Heart left ventricle (tissue), 16 donors: ENCODE measurements at regions of chr12 and their contacts with region 1.

Region 1: GRCh38 chr12:127115468-127116035 is 1151.4 kb upstream of the TMEM132C start:
- DNase-seq: no peak
- ATAC-seq: no peak
- H3K4me3 ChIP-seq: no peak overlapping the region
- H3K27ac ChIP-seq: no peak overlapping the region
- H3K4me1 ChIP-seq: no peaks in the 10 kb centered on the region
- H3K27me3 ChIP-seq: no peaks in the 10 kb centered on the region
- CTCF ChIP-seq: no peak
- POLR2A ChIP-seq: no peak

Region 2: GRCh38 chr12:127280393-127281275 is 165.1 kb after region 1 on chr12:
- intact Hi-C with region 1: loop called in 1 of 10 experiments (anchors 5 kb)
- DNase-seq: peak; percentile 11 to 72 (median 32)
- ATAC-seq: peak in 1 of 4 donors; percentile 61
- H3K4me3 ChIP-seq: no peak overlapping the region
- H3K27ac ChIP-seq: no peak overlapping the region
- H3K4me1 ChIP-seq: no peaks in the 10 kb centered on the region
- H3K27me3 ChIP-seq: peaks cover 0 to 37% (median 9%) of the 10 kb centered on the region in 9 donors
- CTCF ChIP-seq: peak; percentile 62 to 87 (median 74)
- POLR2A ChIP-seq: no peak

Region 3: GRCh38 chr12:127293507-127294310 is 178.2 kb after region 1 on chr12:
- intact Hi-C with region 1: loop called in 1 of 10 experiments (anchors 5 kb)
- DNase-seq: peak in 4 of 5 donors; percentile 17 to 76 (median 40)
- ATAC-seq: peak in 3 of 4 donors; percentile 48 to 80 (median 59)
- H3K4me3 ChIP-seq: no peak overlapping the region
- H3K27ac ChIP-seq: no peak overlapping the region
- H3K4me1 ChIP-seq: no peaks in the 10 kb centered on the region
- H3K27me3 ChIP-seq: peaks cover 0 to 20% (median 0%) of the 10 kb centered on the region in 9 donors
- CTCF ChIP-seq: peak; percentile 32 to 71 (median 63)
- POLR2A ChIP-seq: no peak

Region 4: GRCh38 chr12:127677537-127678131 is 562.1 kb after region 1 on chr12:
- intact Hi-C with region 1: loop called in 2 of 10 experiments (anchors 5 to 10 kb)
- DNase-seq: peak; percentile 35 to 64 (median 53)
- ATAC-seq: peak; percentile 51 to 67 (median 60)
- H3K4me3 ChIP-seq: no peak overlapping the region
- H3K27ac ChIP-seq: no peak overlapping the region
- H3K4me1 ChIP-seq: peaks cover 0 to 8% (median 0%) of the 10 kb centered on the region in 12 donors
- H3K27me3 ChIP-seq: no peaks in the 10 kb centered on the region
- CTCF ChIP-seq: peak; percentile 53 to 85 (median 68)
- POLR2A ChIP-seq: no peak